Activated CD4-positive, alpha-beta T cell treated with anti-CD3 and anti-CD28 coated beads for 36 hours (primary cell): ENCODE measurements at regions of chr12 and their contacts with region 1.

Region 1: GRCh38 chr12:108457006-108457733 is 57.9 kb upstream of the FICD start:
- DNase-seq: peak; percentile 15
- ATAC-seq: no peak
- H3K4me3 Mint-ChIP-seq: no peak overlapping the region
- H3K27ac Mint-ChIP-seq: no peak overlapping the region
- H3K4me1 Mint-ChIP-seq: no peaks in the 10 kb centered on the region
- H3K27me3 Mint-ChIP-seq: peaks cover 15% of the 10 kb centered on the region

Region 2: DNA sequence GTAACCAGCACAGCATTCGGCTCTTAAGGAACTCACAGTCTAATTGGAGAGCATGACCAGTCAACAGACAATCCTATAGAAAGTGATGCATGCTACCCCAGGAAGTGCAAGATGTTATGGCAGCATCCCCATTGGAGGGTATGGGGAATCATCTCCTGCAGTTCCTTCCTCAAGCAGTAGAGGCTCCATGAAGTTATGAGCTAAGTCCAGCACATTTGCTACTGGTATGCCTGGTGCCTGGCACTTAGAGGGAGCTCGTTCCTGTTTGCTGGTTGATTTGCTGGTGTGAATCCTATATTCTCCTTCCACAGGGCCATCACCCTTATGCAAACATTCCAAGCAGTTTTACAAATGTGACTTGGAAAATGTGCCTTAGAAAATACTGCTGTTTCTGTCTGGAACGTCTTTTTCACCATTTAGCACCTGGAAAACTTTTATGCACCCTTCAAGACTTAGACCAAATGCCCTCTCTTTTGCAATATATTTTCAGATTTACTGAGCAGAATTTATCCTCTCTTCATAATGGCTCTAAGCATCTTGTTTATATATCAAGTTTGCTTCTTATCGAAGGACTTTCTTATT is 464.2 kb before region 1 on chr12:
- CTCF ChIA-PET with region 1: interaction called, 6 read pairs
- POLR2A ChIA-PET with region 1: no interaction called
- intact Hi-C with region 1: loop called (anchors 1 to 5 kb)
- DNase-seq: peak; percentile 13
- ATAC-seq: no peak
- H3K4me3 Mint-ChIP-seq: no peak overlapping the region
- H3K27ac Mint-ChIP-seq: no peak overlapping the region
- H3K4me1 Mint-ChIP-seq: no peaks in the 10 kb centered on the region
- H3K27me3 Mint-ChIP-seq: peaks cover 28% of the 10 kb centered on the region

Region 3: GRCh38 chr12:108063192-108063591 is 394.0 kb before region 1 on chr12:
- CTCF ChIA-PET with region 1: no interaction called
- POLR2A ChIA-PET with region 1: no interaction called
- intact Hi-C with region 1: loop called in 1 of 2 experiments (anchors 1 kb)
- DNase-seq: no peak
- ATAC-seq: no peak
- H3K4me3 Mint-ChIP-seq: no peak overlapping the region
- H3K27ac Mint-ChIP-seq: no peak overlapping the region
- H3K4me1 Mint-ChIP-seq: no peaks in the 10 kb centered on the region
- H3K27me3 Mint-ChIP-seq: peaks cover 18% of the 10 kb centered on the region

Region 4: DNA sequence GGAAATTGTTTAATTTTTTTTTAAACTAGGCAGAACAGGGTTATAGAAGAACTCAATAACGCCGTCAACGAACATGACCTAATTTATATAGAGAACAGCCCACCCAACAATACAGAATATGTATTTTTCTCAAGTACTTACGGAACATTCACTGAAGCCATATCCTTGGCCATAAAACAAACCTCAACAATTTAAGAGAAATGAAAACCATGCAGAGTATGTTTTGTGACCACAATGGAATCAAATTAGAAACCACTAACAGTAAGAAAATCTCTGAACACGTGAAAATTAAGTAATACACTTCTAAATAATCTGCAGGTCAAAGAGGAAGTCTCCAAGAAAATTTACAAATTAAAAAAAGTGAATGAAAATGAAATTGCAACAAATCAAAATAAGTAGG is 94.4 kb after region 1 on chr12:
- CTCF ChIA-PET with region 1: no interaction called
- POLR2A ChIA-PET with region 1: no interaction called
- intact Hi-C with region 1: no loop called
- DNase-seq: no peak
- ATAC-seq: no peak
- H3K4me3 Mint-ChIP-seq: peak overlapping the region; percentile 24
- H3K27ac Mint-ChIP-seq: no peak overlapping the region
- H3K4me1 Mint-ChIP-seq: peaks cover 58% of the 10 kb centered on the region
- H3K27me3 Mint-ChIP-seq: no peaks in the 10 kb centered on the region